ENCODE measurements at regions of chr9 and their contacts with region 1.

Region 1: GRCh38 chr9:136109351-136110081 is 9.2 kb downstream of the TMEM250 start:
- DNase-seq: peak; percentile 95

Region 2: GRCh38 chr9:135961277-135961705 is 148.2 kb before region 1 on chr9 and contains the start of gene UBAC1:
- intact Hi-C with region 1: no loop called
- DNase-seq: peak; percentile 98
- total RNA-seq, gene UBAC1: 90.3 TPM

Region 3: GRCh38 chr9:136051517-136052432 is 57.7 kb before region 1 on chr9:
- intact Hi-C with region 1: loop called (anchors 5 kb)
- DNase-seq: peak; percentile 82

Region 4: DNA sequence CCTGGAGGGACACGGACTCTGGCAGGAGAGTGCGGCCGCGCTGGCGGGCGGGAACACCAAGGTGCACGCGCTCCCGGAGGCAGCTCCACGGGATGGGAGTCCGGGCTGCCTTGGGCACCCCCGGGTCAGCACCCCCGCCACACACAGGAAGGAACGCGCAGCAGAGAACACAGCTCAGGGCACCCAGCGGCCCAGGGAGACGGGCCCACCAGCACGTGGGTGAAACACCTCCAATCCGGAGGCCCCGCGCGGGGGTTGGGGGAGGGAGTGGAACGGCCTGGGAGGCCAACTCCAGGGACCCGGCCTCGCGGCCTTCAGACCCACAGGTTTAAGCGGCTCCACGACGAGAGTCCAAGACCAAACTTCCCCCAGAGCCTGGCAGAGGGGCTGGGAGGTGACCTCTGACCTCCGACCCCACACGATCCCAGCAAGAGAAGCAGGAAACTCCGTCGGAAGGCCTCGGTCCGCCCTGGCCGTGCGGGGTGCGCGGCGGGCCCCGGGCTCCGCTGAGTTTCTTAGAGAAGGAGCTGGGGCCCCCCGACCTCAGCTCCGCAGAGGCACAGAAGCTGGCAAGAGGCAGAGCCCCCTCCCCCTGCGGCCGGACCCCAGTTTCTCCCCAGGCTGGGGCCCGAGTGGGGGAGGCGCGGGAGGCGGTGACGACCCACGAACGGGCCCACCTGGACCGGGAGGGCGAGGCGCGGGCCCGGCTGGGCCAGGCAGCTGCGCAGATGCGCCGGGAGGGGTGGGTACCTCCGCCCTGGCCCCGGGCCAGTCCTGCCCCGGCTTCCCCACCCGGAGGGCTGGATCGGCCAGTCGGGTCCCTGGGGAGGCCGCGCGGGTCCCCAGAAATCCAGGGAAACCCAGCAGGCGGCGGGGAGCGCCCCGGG is 15.3 kb before region 1 on chr9:
- intact Hi-C with region 1: loop called (anchors 1 kb)
- DNase-seq: peak; percentile 89

Measured in cardiac septum (tissue), 1 donor.